H1 (cell line): ENCODE measurements at regions of chr14 and their contacts with region 1.

Region 1: GRCh38 chr14:93184388-93185353 is at the starts of genes LYSET and MOAP1:
- DNase-seq: peak; percentile 71 to 87
- H3K4me3 ChIP-seq: peak within 1 kb of the TSS; percentile 87 to 95 (median 94)
- H3K27ac ChIP-seq: peak within 1 kb of the TSS; percentile 84; the same call in 1 of the 2 replicates
- H3K4me1 ChIP-seq: peaks cover 0 to 5% (median 2%) of the 10 kb centered on the region in 4 experiments; a peak in 3 of 7 replicates
- H3K27me3 ChIP-seq: no peaks in the 10 kb centered on the region
- CTCF ChIP-seq: peak; percentile 18 to 45 (median 34); a peak in 3 of 4 replicates
- EP300 ChIP-seq: peak in 1 of 2 experiments; percentile 35; a peak in 1 of 3 replicates
- POLR2A ChIP-seq: peak; percentile 64 to 75
- RAD21 ChIP-seq: peak; percentile 15 to 16; a peak in 2 of 4 replicates
- total RNA-seq, gene LYSET: 26.9 and 27.5 TPM in 2 replicates
- total RNA-seq, gene MOAP1: 17.3 and 18.3 TPM in 2 replicates

Region 2: DNA sequence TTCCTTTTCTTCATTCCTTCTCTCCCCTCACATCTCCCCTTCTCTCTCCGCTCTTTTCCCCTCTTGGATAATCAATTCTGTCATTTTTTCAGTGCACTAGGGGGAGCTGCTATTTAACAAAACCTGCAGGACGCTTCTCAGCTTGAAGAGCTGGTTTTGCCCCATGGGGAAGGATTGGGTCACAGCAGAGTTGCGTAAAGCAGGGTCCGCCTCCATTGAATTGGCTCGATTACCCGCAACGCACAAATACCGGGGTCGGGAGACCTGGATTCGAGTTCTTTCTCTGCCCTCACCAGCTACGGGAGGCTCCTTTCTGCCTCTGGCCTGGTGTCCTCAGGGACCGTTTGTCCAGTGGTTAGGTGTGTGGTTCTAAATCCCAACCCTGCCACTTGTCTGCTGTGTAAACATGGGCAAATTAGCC is 303.8 kb before region 1 on chr14:
- CTCF ChIA-PET with region 1: interaction called, 13 read pairs
- POLR2A ChIA-PET with region 1: no interaction called
- DNase-seq: peak; percentile 41 to 58
- H3K4me3 ChIP-seq: 0 out of 8 replicates have a peak overlapping the region, but pooled peaks of 1 of the 4 experiments have one; percentile 19
- H3K27ac ChIP-seq: no peak overlapping the region
- H3K4me1 ChIP-seq: peaks cover 0 to 12% (median 5%) of the 10 kb centered on the region in 4 experiments; a peak in 5 of 7 replicates
- H3K27me3 ChIP-seq: no peaks in the 10 kb centered on the region; a peak in 1 of 7 replicates
- CTCF ChIP-seq: peak in 2 of 3 experiments; percentile 59 to 71; a peak in 3 of 4 replicates
- EP300 ChIP-seq: no peak
- POLR2A ChIP-seq: no peak
- RAD21 ChIP-seq: peak; percentile 79 to 81

Region 3: DNA sequence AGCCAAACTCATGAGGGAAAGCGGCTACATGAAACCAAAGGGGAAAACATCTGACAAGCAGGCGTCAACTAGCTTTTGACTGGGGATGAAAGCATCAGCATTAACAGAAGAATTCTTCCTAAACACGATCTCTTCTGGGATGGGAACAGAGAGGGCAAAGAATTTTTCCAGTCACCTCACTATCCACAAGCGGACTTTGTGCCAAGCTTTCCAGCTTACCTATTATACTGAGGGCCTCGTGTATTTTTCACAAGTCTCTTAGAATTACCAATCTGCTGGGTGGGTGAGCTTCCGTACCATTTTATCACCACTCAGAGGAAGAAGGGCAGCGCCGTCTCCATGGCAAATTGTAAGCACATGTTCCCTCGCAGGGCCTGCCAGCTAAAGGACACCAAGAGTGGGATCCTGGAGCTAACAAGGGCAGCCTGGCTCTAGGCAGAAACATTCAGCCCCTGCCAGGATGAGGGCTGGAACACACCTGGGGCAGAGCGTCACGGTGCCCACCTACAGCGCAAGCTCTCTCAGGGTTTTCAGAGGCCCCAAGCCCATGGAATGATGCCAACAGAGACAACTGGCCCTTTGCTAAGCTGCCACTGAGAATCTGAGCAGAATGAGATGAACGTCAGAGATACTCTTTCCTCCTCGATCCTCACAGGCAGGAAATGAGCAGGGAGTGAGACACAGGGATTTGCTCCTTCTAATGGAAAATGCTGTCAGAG is 187.2 kb before region 1 on chr14:
- CTCF ChIA-PET with region 1: no interaction called
- POLR2A ChIA-PET with region 1: no interaction called
- DNase-seq: no peak
- H3K4me3 ChIP-seq: no peak overlapping the region
- H3K27ac ChIP-seq: no peak overlapping the region
- H3K4me1 ChIP-seq: peaks cover 0 to 6% (median 0%) of the 10 kb centered on the region in 4 experiments; a peak in 2 of 7 replicates
- H3K27me3 ChIP-seq: no peaks in the 10 kb centered on the region
- CTCF ChIP-seq: no peak
- EP300 ChIP-seq: no peak
- POLR2A ChIP-seq: no peak
- RAD21 ChIP-seq: no peak

Region 4: GRCh38 chr14:93137864-93138263 is 46.8 kb before region 1 on chr14:
- CTCF ChIA-PET with region 1: interaction called, 11 read pairs
- POLR2A ChIA-PET with region 1: no interaction called
- DNase-seq: no peak
- H3K4me3 ChIP-seq: no peak overlapping the region
- H3K27ac ChIP-seq: no peak overlapping the region
- H3K4me1 ChIP-seq: no peaks in the 10 kb centered on the region
- H3K27me3 ChIP-seq: no peaks in the 10 kb centered on the region
- CTCF ChIP-seq: peak in 2 of 3 experiments; percentile 18 to 24; a peak in 2 of 4 replicates
- EP300 ChIP-seq: no peak
- POLR2A ChIP-seq: no peak
- RAD21 ChIP-seq: peak in 1 of 2 experiments; percentile 33; a peak in 2 of 4 replicates

Region 5: GRCh38 chr14:93173943-93174395 is 10.7 kb before region 1 on chr14:
- CTCF ChIA-PET with region 1: interaction called, 28 read pairs
- POLR2A ChIA-PET with region 1: interaction called, 5 read pairs
- DNase-seq: no peak
- H3K4me3 ChIP-seq: no peak overlapping the region
- H3K27ac ChIP-seq: no peak overlapping the region
- H3K4me1 ChIP-seq: no peaks in the 10 kb centered on the region
- H3K27me3 ChIP-seq: no peaks in the 10 kb centered on the region; a peak in 1 of 7 replicates
- CTCF ChIP-seq: no peak
- EP300 ChIP-seq: no peak
- POLR2A ChIP-seq: no peak
- RAD21 ChIP-seq: no peak

Region 6: GRCh38 chr14:93206793-93207467 is 22.3 kb after region 1 on chr14 and contains the starts of genes GON7 and UBR7:
- CTCF ChIA-PET with region 1: interaction called, 19 read pairs
- POLR2A ChIA-PET with region 1: interaction called, 25 read pairs
- DNase-seq: peak; percentile 91 to 95
- H3K4me3 ChIP-seq: peak within 1 kb of the TSS; percentile 77 to 99 (median 93)
- H3K27ac ChIP-seq: peak within 1 kb of the TSS; percentile 65
- H3K4me1 ChIP-seq: peaks cover 0 to 6% (median 4%) of the 10 kb centered on the region in 4 experiments; a peak in 3 of 7 replicates
- H3K27me3 ChIP-seq: no peaks in the 10 kb centered on the region
- CTCF ChIP-seq: peak; percentile 19 to 33 (median 29); a peak in 3 of 4 replicates
- EP300 ChIP-seq: no peak
- POLR2A ChIP-seq: peak; percentile 52 to 75
- RAD21 ChIP-seq: 0 out of 4 replicates have a peak, but pooled peaks of 1 of the 2 experiments have one; percentile 8
- total RNA-seq, gene GON7: 8.8 and 9.9 TPM in 2 replicates
- total RNA-seq, gene UBR7: 28.4 and 29.4 TPM in 2 replicates

Region 7: GRCh38 chr14:93220509-93220908 is 35.8 kb after region 1 on chr14:
- CTCF ChIA-PET with region 1: no interaction called
- POLR2A ChIA-PET with region 1: no interaction called
- DNase-seq: no peak
- H3K4me3 ChIP-seq: no peak overlapping the region
- H3K27ac ChIP-seq: no peak overlapping the region
- H3K4me1 ChIP-seq: no peaks in the 10 kb centered on the region
- H3K27me3 ChIP-seq: no peaks in the 10 kb centered on the region
- CTCF ChIP-seq: no peak
- EP300 ChIP-seq: no peak
- POLR2A ChIP-seq: no peak
- RAD21 ChIP-seq: no peak